Adrenal gland (tissue), 19 donors: ENCODE measurements at regions of chr7 and their contacts with region 1.

Region 1: DNA sequence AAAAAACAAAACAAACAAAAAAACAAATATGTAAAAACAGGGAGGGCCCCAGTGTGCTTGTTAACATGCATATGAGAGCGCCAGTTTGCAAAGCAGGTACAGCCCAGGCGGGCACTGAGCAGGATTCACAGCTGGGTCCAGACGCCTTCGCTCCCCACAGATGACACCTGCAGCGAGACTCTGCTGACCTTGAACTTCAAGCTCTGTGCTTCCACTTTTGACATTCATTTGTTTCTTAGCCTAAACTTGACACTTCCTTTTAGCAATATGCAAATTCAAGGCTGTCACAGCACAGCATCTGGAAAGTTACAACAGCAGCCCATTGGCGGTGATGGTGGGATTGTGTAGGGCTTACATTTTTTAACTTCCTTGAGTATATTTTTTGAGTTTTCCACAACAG is 88.8 kb upstream of the TNS3 start:
- DNase-seq: peak in 1 of 7 donors; percentile 14
- H3K4me3 ChIP-seq: no peak overlapping the region
- H3K27ac ChIP-seq: no peak overlapping the region
- H3K4me1 ChIP-seq: peaks cover 3 to 13% of the 10 kb centered on the region in 2 donors
- H3K27me3 ChIP-seq: no peaks in the 10 kb centered on the region
- CTCF ChIP-seq: no peak
- POLR2A ChIP-seq: no peak

Region 2: DNA sequence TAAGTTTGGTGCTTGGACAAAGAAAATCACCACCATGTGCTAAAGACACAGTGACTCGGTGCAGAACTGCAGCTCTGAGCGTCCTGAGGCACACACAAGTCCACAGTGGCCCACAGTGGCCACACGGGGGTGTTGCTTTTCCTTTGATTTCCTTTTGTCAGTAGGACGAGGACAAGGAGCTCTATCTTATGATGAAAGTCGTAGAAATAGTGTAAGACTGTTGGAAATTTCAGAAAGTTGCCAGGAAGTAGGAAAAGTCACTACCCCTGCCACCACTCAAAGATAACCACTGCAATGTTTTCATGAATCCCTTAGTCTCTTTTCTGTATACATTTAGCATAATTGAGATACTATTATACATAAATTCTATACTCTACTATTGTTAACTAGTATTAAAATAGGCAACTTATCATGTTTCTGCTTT is 234.8 kb before region 1 on chr7:
- intact Hi-C with region 1: loop called in 1 of 2 experiments (anchors 10 kb)
- DNase-seq: peak; percentile 74 to 94 (median 86)
- H3K4me3 ChIP-seq: no peak overlapping the region
- H3K27ac ChIP-seq: peak overlapping the region in 1 of 5 donors; percentile 2
- H3K4me1 ChIP-seq: peaks cover 0 to 9% of the 10 kb centered on the region in 2 donors
- H3K27me3 ChIP-seq: no peaks in the 10 kb centered on the region
- CTCF ChIP-seq: peak; percentile 72 to 90 (median 84)
- POLR2A ChIP-seq: no peak

Region 3: DNA sequence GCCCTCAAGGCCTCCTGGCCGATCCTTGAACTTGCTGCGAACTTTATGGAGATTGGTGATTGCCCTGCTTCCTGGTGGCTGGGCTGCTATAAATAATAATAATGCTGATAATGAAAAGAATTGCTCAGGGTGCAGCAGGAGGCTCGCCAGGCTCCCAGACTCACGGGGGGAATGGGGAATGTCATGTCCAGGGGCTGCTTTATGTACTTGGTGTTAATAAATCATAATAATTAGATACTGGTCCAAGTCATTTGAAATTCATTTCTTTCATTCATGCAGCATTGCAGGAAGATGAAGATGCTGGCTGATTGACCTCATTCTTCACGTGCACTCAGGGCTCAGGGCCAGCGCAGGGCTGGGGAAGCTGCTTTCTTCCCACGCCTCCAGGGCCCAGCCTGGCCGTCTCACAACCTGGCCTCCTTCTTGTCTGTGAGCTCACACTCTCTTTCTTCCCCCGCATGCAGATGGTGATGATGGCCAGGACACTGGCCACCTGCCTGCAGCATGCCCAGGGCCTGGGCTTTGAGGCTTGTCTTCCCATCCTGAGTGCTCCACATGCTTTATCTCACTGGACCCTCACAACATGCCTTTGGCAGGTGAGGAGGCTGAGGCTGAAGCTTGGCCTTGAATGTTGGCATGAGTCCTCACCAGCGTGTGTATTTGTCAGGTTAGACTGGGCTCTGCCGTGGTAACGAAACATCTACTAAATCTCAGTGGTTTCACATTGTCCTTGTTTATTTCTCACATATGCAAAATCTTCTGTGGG is 49.6 kb after region 1 on chr7:
- intact Hi-C with region 1: no loop called
- DNase-seq: peak in 5 of 7 donors; percentile 35 to 73 (median 48)
- H3K4me3 ChIP-seq: no peak overlapping the region
- H3K27ac ChIP-seq: peak overlapping the region in 2 of 5 donors; percentile 14 to 55
- H3K4me1 ChIP-seq: peaks cover 0 to 17% of the 10 kb centered on the region in 2 donors
- H3K27me3 ChIP-seq: no peaks in the 10 kb centered on the region
- CTCF ChIP-seq: no peak
- POLR2A ChIP-seq: no peak

Region 4: GRCh38 chr7:47751043-47751442 is 80.3 kb after region 1 on chr7:
- intact Hi-C with region 1: no loop called
- DNase-seq: no peak
- H3K4me3 ChIP-seq: no peak overlapping the region
- H3K27ac ChIP-seq: no peak overlapping the region
- H3K4me1 ChIP-seq: no peaks in the 10 kb centered on the region
- H3K27me3 ChIP-seq: no peaks in the 10 kb centered on the region
- CTCF ChIP-seq: no peak
- POLR2A ChIP-seq: no peak